ENCODE measurements at regions of chr2 and their contacts with region 1.

Region 1: GRCh38 chr2:24304098-24304497 is 56.2 kb downstream of the ITSN2 start:
- DNase-seq: peak; percentile 87
- H3K4me3 Mint-ChIP-seq: no peak overlapping the region
- H3K27ac Mint-ChIP-seq: peak overlapping the region; percentile 41
- H3K4me1 Mint-ChIP-seq: peaks cover 13% of the 10 kb centered on the region
- H3K27me3 Mint-ChIP-seq: no peaks in the 10 kb centered on the region
- CTCF ChIP-seq: no peak

Region 2: GRCh38 chr2:24360050-24360962 is 56.2 kb after region 1 on chr2 and contains the start of gene ITSN2:
- CTCF ChIA-PET with region 1: no interaction called
- POLR2A ChIA-PET with region 1: interaction called, 29 read pairs
- intact Hi-C with region 1: no loop called
- DNase-seq: peak; percentile 66
- H3K4me3 Mint-ChIP-seq: peak within 1 kb of the TSS; percentile 68
- H3K27ac Mint-ChIP-seq: peak within 1 kb of the TSS; percentile 78
- H3K4me1 Mint-ChIP-seq: peaks cover 16% of the 10 kb centered on the region
- H3K27me3 Mint-ChIP-seq: no peaks in the 10 kb centered on the region
- CTCF ChIP-seq: no peak
- total RNA-seq, gene ITSN2: 36.5 and 40.8 TPM in 2 replicates

Measured in MCF 10A (cell line).